Activated T-helper 2 cell treated with anti-CD3 and anti-CD28 coated beads, Interferon-gamma antibody, Interleukin-2, Interleukin-4, amounts not matched to agents 10 μg/mL and 5 μg/mL and 100 μg/mL, durations not matched to agents 14 hours and 24 hours and 36 hours (primary cell): ENCODE measurements at regions of chr1 and their contacts with region 1.

Region 1: DNA sequence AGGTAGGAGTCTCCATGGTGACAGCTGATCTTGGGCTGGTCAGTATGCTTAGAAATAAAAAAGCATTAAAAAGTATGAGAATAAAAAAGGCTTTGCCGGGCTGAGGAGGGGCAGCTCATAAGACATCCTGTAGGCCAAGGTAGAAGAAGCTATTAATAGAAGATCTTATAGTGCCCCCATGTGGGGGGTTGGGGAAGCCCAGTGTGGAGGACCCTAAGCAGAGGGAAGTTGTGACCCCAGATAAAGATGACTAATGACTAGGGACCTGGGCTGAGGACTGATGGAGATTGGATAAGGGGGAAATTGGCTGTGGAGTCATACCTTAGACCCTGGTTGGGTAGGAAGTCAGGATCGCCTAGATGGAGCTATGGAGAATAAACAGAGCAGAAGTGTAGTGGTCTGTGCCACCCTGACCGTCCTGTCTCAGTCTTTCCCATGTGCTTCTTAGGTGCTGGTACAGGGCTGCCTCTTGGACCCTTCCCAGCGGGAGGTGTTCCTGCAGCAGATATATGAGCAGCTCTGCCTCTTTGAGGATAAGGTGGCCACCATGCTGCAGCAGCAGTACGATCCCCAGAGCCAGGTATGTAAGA is 25.0 kb downstream of the SZT2 start:
- DNase-seq: peak; percentile 39
- H3K4me3 Mint-ChIP-seq: no peak overlapping the region
- H3K27ac Mint-ChIP-seq: no peak overlapping the region
- H3K4me1 Mint-ChIP-seq: no peaks in the 10 kb centered on the region
- H3K27me3 Mint-ChIP-seq: no peaks in the 10 kb centered on the region

Region 2: DNA sequence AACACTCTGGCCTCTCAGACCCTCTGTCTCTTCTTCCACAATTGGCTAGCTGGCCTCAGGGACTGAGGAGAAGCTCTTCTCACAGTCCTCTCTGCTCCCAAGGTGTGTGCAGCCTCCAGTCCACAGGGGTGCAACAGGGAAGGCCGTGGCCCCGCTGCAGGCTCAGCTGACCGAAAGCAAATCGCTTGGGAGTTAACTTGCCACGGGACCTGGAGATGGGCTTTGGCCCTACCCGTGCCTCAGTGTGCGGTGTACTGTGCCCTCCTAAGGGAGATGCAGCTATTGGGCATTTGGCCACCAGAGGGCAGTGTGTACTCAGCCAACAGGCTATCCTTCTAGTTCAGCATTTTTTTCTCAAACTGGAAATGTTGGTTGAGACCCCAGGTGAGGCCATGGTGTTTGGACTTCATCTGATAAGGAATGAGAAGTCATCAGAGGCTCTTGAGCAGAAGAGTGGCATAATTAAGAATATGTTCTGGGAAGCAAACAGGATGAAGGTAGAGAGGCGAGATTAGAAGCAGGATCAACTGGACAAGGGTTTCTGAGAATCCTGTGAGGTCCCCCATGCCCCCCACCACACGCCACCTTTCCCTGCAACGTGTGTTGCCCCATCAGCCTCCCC is 187.5 kb before region 1 on chr1:
- intact Hi-C with region 1: loop called (anchors 1 kb)
- DNase-seq: peak; percentile 62
- H3K4me3 Mint-ChIP-seq: no peak overlapping the region
- H3K27ac Mint-ChIP-seq: no peak overlapping the region
- H3K4me1 Mint-ChIP-seq: peaks cover 1% of the 10 kb centered on the region
- H3K27me3 Mint-ChIP-seq: peaks cover 7% of the 10 kb centered on the region

Region 3: DNA sequence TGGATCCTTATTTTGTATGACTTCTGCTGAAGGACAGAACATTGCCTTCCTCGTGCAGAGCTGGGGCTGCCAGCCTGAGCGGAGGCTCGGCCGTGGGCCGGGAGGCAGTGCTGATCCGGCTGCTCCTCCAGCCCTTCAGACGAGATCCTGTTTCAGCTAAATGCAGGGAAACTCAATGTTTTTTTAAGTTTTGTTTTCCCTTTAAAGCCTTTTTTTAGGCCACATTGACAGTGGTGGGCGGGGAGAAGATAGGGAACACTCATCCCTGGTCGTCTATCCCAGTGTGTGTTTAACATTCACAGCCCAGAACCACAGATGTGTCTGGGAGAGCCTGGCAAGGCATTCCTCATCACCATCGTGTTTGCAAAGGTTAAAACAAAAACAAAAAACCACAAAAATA is 207.7 kb after region 1 on chr1:
- intact Hi-C with region 1: no loop called
- DNase-seq: no peak
- H3K4me3 Mint-ChIP-seq: no peak overlapping the region
- H3K27ac Mint-ChIP-seq: no peak overlapping the region
- H3K4me1 Mint-ChIP-seq: no peaks in the 10 kb centered on the region
- H3K27me3 Mint-ChIP-seq: no peaks in the 10 kb centered on the region